ENCODE measurements at regions of chr7 and their contacts with region 1.

Region 1: DNA sequence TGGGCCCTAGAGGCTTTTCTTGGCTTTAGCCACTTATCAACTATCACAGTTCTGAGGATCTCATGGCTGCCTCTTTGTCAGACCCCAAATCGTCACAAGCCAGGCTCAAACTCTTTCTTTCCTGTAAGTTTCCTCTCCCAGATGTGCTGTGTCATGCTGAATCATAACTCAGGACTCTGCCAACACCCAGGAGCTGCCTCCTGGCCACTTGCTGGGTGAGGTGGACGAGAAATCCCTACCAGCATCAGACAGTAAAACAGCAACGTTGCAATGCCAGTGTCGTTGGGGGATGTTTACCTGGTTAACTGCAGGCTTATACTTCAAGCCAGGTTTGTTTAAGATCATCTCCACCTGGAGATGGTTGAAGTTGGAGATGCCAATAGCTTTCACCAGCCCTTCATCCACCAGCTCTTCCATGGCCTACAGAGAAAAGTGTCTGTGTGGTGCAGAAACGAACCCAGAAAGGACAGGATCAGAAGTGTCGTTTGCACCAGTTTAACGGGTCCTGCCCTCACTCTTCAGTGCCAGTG is 10.1 kb downstream of the AKR1B1 start:
- DNase-seq: no peak
- H3K4me3 Mint-ChIP-seq: no peak overlapping the region
- H3K27ac Mint-ChIP-seq: peak overlapping the region; percentile 37
- H3K4me1 Mint-ChIP-seq: peaks cover 12% of the 10 kb centered on the region
- H3K27me3 Mint-ChIP-seq: no peaks in the 10 kb centered on the region

Region 2: DNA sequence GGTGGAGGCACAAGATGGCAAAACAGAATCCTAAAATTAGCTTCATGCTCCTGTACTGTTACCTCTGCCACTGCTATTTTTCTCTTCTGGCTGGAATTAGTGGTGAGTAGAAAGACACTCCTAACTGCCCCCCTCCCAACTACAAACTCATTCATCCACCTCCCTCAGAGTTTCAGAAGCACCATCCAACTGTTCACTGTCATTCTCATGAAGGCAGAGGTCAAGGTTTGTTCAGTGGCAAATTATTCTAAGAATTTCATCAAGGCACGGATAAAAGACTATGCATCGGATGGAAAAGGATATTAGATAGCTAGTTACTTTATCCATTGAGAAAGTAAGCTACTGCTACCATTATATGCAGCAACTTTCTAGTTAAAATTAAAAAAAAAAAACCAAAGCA is 262.0 kb before region 1 on chr7:
- CTCF ChIA-PET with region 1: no interaction called
- DNase-seq: no peak
- H3K4me3 Mint-ChIP-seq: no peak overlapping the region
- H3K27ac Mint-ChIP-seq: no peak overlapping the region
- H3K4me1 Mint-ChIP-seq: no peaks in the 10 kb centered on the region
- H3K27me3 Mint-ChIP-seq: no peaks in the 10 kb centered on the region

Region 3: GRCh38 chr7:134458806-134459698 is 10.3 kb after region 1 on chr7 and contains the start of gene AKR1B1:
- CTCF ChIA-PET with region 1: interaction called, 10 read pairs
- DNase-seq: peak; percentile 93
- H3K4me3 Mint-ChIP-seq: peak within 1 kb of the TSS; percentile 72
- H3K27ac Mint-ChIP-seq: peak within 1 kb of the TSS; percentile 78
- H3K4me1 Mint-ChIP-seq: peaks cover 50% of the 10 kb centered on the region
- H3K27me3 Mint-ChIP-seq: peaks cover 3% of the 10 kb centered on the region

Region 4: GRCh38 chr7:134619627-134620331 is 171.0 kb after region 1 on chr7:
- CTCF ChIA-PET with region 1: no interaction called
- DNase-seq: no peak
- H3K4me3 Mint-ChIP-seq: no peak overlapping the region
- H3K27ac Mint-ChIP-seq: no peak overlapping the region
- H3K4me1 Mint-ChIP-seq: no peaks in the 10 kb centered on the region
- H3K27me3 Mint-ChIP-seq: peaks cover 34% of the 10 kb centered on the region

Measured in activated naive CD4-positive, alpha-beta T cell treated with anti-CD3 and anti-CD28 coated beads, Interleukin-2, amount 10 ng/mL, durations not matched to agents 7 days and 5 days (primary cell).